CD14-positive monocyte (primary cell): ENCODE measurements at regions of chrX and their contacts with region 1.

Region 1: DNA sequence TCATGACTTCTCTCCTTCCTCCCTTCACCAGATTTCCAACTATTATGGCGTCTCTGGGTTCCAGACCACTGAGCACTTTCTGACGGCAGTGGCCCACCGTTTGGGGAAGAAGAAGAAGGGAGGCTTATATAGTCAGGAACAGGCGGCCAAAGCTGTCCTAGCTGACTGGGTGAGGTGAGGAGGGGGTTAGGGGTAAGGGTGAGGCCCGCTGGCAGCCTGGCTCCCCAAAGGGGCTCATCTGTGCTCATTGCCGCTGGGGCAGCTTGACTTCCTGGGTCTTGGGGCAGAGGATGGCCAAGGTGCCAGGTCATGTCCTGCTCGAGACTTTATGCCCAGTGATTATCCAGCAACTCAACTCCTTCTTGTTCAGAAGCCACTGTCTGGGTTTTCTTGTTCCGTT is 21.8 kb downstream of the GNL3L start:
- DNase-seq: no peak
- H3K4me3 ChIP-seq: no peak overlapping the region
- H3K4me3 Mint-ChIP-seq: no peak overlapping the region
- H3K27ac ChIP-seq: no peak overlapping the region
- H3K27ac Mint-ChIP-seq: no peak overlapping the region
- H3K4me1 ChIP-seq: no peaks in the 10 kb centered on the region
- H3K4me1 Mint-ChIP-seq: no peaks in the 10 kb centered on the region
- H3K27me3 ChIP-seq: no peaks in the 10 kb centered on the region
- H3K27me3 Mint-ChIP-seq: peaks cover 0 to 3% (median 2%) of the 10 kb centered on the region in 3 donors
- CTCF ChIP-seq: no peak

Region 2: DNA sequence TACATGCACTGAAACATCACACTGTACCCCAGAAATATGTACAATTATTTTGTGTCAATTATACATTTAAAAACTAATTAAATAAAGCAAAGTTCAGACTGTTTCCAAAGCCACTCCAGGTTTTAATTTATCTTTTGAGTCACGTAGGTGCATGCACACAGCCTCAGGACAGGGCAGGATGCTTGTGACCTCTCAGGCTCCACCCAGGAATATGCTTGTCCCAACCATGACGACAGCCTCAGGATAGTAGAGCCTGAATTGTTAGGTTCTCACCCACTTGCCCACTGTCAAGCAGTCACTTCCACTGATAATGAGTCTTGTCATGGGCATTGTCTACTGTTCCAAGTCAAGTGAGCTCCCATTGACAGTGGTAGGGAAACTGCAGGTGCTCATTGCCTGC is 176.6 kb after region 1 on chrX:
- intact Hi-C with region 1: no loop called
- DNase-seq: no peak
- H3K4me3 ChIP-seq: no peak overlapping the region
- H3K4me3 Mint-ChIP-seq: no peak overlapping the region
- H3K27ac ChIP-seq: no peak overlapping the region
- H3K27ac Mint-ChIP-seq: no peak overlapping the region
- H3K4me1 ChIP-seq: no peaks in the 10 kb centered on the region
- H3K4me1 Mint-ChIP-seq: no peaks in the 10 kb centered on the region
- H3K27me3 ChIP-seq: no peaks in the 10 kb centered on the region
- H3K27me3 Mint-ChIP-seq: peaks cover 0 to 3% (median 1%) of the 10 kb centered on the region in 3 donors
- CTCF ChIP-seq: no peak

Region 3: DNA sequence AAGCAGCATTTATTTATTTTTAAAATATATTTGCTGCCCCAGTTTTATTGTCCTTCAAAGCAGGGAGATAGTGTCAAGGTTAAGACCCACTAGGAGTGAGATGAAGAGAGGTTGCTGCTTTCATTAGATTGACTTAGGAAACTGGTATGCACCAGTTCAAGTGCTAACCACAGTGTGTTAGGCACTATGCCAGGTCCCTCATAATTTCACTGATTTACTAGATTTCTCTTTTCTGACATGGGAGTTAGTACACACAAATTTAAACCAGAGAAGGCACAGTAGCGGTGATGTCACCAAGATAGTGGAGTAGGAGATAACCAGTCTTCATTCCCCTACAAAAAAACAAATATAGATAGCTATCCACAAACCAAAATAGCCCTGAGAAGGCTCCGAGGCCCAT is 1180.0 kb after region 1 on chrX:
- intact Hi-C with region 1: loop called in 1 of 2 experiments (anchors 10 kb)
- DNase-seq: no peak
- H3K4me3 ChIP-seq: no peak overlapping the region
- H3K4me3 Mint-ChIP-seq: no peak overlapping the region
- H3K27ac ChIP-seq: no peak overlapping the region
- H3K27ac Mint-ChIP-seq: no peak overlapping the region
- H3K4me1 ChIP-seq: no peaks in the 10 kb centered on the region
- H3K4me1 Mint-ChIP-seq: no peaks in the 10 kb centered on the region
- H3K27me3 ChIP-seq: no peaks in the 10 kb centered on the region
- H3K27me3 Mint-ChIP-seq: no peaks in the 10 kb centered on the region
- CTCF ChIP-seq: no peak